Left cardiac atrium (tissue), 4 donors: ENCODE measurements at regions of chr14 and their contacts with region 1.

Region 1: DNA sequence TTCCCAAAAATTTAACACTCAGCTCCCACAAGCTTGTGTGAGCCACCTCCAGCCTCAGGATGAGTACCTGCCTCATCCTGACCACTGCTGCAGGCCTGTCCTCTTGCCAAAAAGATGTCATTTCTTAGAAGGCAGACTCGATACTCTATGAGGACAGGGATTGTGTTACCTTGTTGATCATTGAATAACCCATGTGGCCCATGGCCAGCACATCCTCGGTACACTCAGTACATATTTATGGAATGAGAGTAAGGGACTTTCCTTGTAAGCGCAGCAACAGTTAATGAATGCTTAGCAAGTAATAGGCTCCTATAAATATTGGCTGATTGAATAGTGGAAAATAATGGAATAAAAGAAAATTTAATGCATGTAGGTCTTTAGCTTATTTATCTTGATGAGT is 15.3 kb upstream of the DGLUCY start:
- DNase-seq: no peak
- ATAC-seq: no peak

Region 2: GRCh38 chr14:91078095-91078737 is 20.4 kb before region 1 on chr14:
- intact Hi-C with region 1: loop called in 1 of 2 experiments (anchors 1 kb)
- DNase-seq: no peak
- ATAC-seq: no peak